ENCODE measurements at regions of chr11 and their contacts with region 1.

Region 1: DNA sequence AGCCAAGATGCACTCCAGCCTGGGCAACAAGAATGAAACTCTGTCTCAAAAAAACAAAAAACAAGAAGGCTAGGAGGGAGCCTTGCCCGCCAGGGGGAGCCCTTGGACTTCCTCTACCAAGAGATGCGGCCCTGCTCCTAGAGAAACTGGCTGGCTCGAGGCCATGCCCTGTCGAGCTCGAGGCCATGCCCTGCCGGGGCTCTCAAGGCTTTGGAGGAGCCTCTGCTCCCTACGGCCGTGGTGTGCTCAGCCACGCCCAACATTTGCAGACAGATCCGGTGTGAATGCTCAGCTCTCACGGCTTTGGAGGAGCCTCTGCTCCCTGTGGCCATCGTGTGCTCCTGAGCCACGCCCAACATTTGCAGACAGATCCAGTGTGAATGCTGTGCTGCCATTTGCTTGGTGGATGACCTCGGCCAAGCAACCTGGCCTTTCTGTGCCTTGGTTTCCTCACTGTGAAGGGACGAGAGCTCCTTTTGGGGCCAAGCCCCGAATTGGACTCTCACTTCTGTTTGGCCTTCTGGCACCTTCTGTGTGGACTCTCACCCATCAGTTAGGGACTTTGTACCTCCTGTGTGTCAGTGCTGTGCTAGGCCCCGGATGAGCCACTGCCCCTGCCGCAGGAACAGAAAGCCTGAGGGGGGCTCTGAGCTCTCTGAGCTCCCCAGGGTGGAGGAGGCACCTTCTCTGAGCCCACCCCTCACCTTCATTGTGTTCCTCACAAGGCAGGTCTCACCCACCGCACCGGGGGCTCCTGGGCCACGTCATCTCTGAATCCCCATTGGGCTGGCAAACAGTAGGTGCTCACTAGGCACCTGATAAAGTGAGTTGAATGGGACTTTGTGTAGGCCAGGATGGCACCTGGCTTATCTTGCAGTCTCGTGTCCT is 14.1 kb downstream of the C11orf24 start:
- DNase-seq: peak; percentile 96 to 99 (median 99)
- H3K4me3 ChIP-seq: no peak overlapping the region
- H3K27ac ChIP-seq: peak overlapping the region in 1 of 5 donors; percentile 35
- H3K4me1 ChIP-seq: peaks cover 0 to 5% of the 10 kb centered on the region in 2 donors
- H3K27me3 ChIP-seq: no peaks in the 10 kb centered on the region
- CTCF ChIP-seq: peak; percentile 91 to 96 (median 94)
- POLR2A ChIP-seq: no peak

Region 2: GRCh38 chr11:68297812-68298658 is 40.3 kb after region 1 on chr11:
- intact Hi-C with region 1: loop called (anchors 2 to 5 kb)
- DNase-seq: peak; percentile 66 to 85 (median 78)
- H3K4me3 ChIP-seq: peak overlapping the region in 1 of 4 donors; percentile 32
- H3K27ac ChIP-seq: peak overlapping the region in 1 of 5 donors; percentile 16
- H3K4me1 ChIP-seq: peaks cover 6 to 12% of the 10 kb centered on the region in 2 donors
- H3K27me3 ChIP-seq: no peaks in the 10 kb centered on the region
- CTCF ChIP-seq: peak; percentile 90 to 99 (median 96)
- POLR2A ChIP-seq: no peak

Region 3: DNA sequence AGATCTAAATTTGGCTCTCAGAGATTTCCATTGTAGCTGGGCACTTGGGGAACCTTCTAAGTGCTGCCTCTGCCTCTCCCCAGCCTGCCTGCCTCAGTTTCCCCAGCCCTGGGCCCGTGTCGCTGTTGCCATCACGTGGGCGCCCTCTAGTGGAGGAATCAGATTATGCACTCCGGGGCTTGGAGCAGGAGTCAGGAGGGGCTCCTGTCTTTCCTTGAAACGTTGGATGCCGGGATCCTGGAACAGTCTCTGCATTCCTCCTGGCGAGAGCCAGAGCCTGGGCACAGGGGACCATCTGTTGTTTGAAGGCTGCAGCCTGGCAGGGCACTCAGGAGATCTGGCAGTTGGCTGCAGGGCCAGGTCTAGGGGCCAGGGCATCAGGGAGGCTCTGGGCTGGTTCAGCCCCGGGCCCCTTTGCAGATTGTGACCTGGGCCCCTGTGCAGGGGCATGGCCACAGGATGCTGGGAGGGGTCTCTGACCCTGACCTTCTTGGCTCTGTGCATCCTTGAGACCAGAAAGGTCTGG is 126.3 kb after region 1 on chr11:
- intact Hi-C with region 1: loop called (anchors 5 kb)
- DNase-seq: peak; percentile 50 to 85 (median 72)
- H3K4me3 ChIP-seq: no peak overlapping the region
- H3K27ac ChIP-seq: peak overlapping the region in 1 of 5 donors; percentile 23
- H3K4me1 ChIP-seq: peaks cover 9 to 45% of the 10 kb centered on the region in 2 donors
- H3K27me3 ChIP-seq: no peaks in the 10 kb centered on the region
- CTCF ChIP-seq: peak; percentile 86 to 95 (median 90)
- POLR2A ChIP-seq: no peak

Region 4: GRCh38 chr11:68447015-68447801 is 189.5 kb after region 1 on chr11:
- intact Hi-C with region 1: loop called (anchors 1 to 5 kb)
- DNase-seq: peak; percentile 72 to 86 (median 79)
- H3K4me3 ChIP-seq: no peak overlapping the region
- H3K27ac ChIP-seq: no peak overlapping the region
- H3K4me1 ChIP-seq: no peaks in the 10 kb centered on the region
- H3K27me3 ChIP-seq: no peaks in the 10 kb centered on the region
- CTCF ChIP-seq: peak; percentile 80 to 96 (median 92)
- POLR2A ChIP-seq: no peak